BJ (cell line): ENCODE measurements at regions of chr18 and their contacts with region 1.

Region 1: GRCh38 chr18:36947821-36948348 is 119.0 kb downstream of the KIAA1328 start:
- DNase-seq: no peak
- H3K4me3 ChIP-seq: no peak overlapping the region
- H3K27me3 ChIP-seq: no peaks in the 10 kb centered on the region
- CTCF ChIP-seq: no peak

Region 2: GRCh38 chr18:35982409-35983114 is 965.3 kb before region 1 on chr18:
- CTCF ChIA-PET with region 1: no interaction called
- POLR2A ChIA-PET with region 1: interaction called, 16 read pairs
- DNase-seq: peak; percentile 5
- H3K4me3 ChIP-seq: no peak overlapping the region
- H3K27me3 ChIP-seq: no peaks in the 10 kb centered on the region
- CTCF ChIP-seq: no peak